ENCODE measurements at regions of chr11 and their contacts with region 1.

Region 1: DNA sequence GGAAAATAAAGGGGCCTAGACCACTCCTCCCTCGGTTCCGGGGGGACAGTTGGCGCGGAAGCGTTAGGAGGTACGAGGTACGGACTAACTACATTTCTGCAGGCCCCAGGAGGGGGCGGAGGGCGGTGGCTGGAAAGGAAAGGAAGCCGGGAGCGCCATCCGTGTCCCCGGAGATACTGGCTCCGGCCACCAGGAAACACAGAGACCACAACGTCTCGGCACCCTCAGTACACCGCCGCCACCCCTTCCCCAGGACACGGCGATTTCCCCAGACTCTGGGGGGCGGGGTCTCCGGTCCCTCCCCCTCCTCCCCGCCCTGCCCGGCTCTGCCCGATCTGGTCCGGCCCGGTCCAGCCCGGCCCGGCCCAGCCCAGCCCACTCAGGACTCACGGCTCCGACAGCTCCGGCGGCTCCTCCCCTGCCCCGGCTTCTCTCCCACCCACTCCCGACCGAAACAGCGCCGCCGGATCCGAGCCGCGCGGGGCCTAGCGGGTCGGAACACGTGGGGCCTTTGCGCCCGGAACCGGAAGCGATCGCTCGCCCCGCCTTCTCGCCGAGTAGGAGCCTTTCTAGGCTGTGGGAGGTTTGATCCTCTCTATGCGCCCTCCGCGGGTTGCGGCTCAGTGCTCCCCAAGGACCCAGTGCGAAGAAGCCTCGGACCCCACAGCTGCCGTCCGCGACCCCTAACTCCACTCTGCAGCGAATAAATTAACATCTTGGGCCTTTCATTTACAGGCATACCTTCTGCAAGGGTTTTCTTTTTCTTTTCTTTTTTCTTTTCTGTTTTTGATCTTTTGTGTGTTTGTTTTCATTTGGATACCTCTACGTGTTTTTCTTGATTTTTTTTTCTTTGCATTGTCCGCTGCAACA is at the start of gene ZNF202:
- DNase-seq: peak; percentile 49 to 90
- H3K4me3 ChIP-seq: peak within 1 kb of the TSS; percentile 82 to 95 (median 89)
- H3K27ac ChIP-seq: peak within 1 kb of the TSS; percentile 56
- H3K4me1 ChIP-seq: peaks cover 2 to 28% (median 14%) of the 10 kb centered on the region in 4 experiments; a peak in 6 of 7 replicates
- H3K27me3 ChIP-seq: no peaks in the 10 kb centered on the region
- CTCF ChIP-seq: peak; percentile 14 to 36 (median 31); a peak in 2 of 4 replicates
- EP300 ChIP-seq: no peak
- POLR2A ChIP-seq: peak; percentile 82 to 85
- RAD21 ChIP-seq: peak; percentile 9 to 21; a peak in 2 of 4 replicates
- total RNA-seq, gene ZNF202: 33.0 and 33.9 TPM in 2 replicates

Region 2: DNA sequence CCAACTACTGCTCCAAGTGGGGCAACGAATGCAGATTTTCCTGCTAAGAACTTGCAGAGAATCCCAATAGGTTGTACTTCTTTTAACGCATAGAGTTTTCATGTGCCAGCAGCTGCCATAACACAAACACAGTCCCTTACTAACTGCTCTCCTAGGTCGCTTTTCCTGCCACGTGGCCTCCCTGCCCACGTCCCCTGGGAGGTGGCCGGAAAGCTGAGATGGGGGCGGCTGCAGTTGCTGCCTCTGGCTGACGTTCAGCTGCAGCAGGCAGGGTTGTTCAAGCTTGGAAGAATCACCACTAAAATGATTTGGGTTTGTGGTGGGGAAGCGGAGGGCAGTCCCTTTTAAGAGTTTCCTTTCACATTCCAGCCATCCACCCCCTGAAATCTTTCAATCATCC is 39.3 kb before region 1 on chr11:
- CTCF ChIA-PET with region 1: no interaction called
- POLR2A ChIA-PET with region 1: no interaction called
- DNase-seq: no peak
- H3K4me3 ChIP-seq: no peak overlapping the region
- H3K27ac ChIP-seq: no peak overlapping the region
- H3K4me1 ChIP-seq: no peaks in the 10 kb centered on the region
- H3K27me3 ChIP-seq: no peaks in the 10 kb centered on the region; a peak in 1 of 7 replicates
- CTCF ChIP-seq: no peak
- EP300 ChIP-seq: no peak
- POLR2A ChIP-seq: no peak
- RAD21 ChIP-seq: no peak

Region 3: GRCh38 chr11:123729602-123730001 is 11.8 kb before region 1 on chr11:
- CTCF ChIA-PET with region 1: interaction called, 5 read pairs
- POLR2A ChIA-PET with region 1: interaction called, 12 read pairs
- DNase-seq: no peak
- H3K4me3 ChIP-seq: no peak overlapping the region
- H3K27ac ChIP-seq: no peak overlapping the region
- H3K4me1 ChIP-seq: no peaks in the 10 kb centered on the region
- H3K27me3 ChIP-seq: no peaks in the 10 kb centered on the region
- CTCF ChIP-seq: no peak
- EP300 ChIP-seq: no peak
- POLR2A ChIP-seq: no peak
- RAD21 ChIP-seq: no peak

Region 4: GRCh38 chr11:123775289-123775688 is 33.9 kb after region 1 on chr11:
- CTCF ChIA-PET with region 1: interaction called, 9 read pairs
- POLR2A ChIA-PET with region 1: interaction called, 11 read pairs
- DNase-seq: peak in 1 of 2 experiments; percentile 53
- H3K4me3 ChIP-seq: peak overlapping the region in 1 of 4 experiments; percentile 27; a peak in 1 of 8 replicates
- H3K27ac ChIP-seq: no peak overlapping the region
- H3K4me1 ChIP-seq: peaks cover 0 to 30% (median 13%) of the 10 kb centered on the region in 4 experiments
- H3K27me3 ChIP-seq: no peaks in the 10 kb centered on the region
- CTCF ChIP-seq: no peak
- EP300 ChIP-seq: peak in 1 of 2 experiments; percentile 71; a peak in 1 of 3 replicates
- POLR2A ChIP-seq: no peak
- RAD21 ChIP-seq: no peak

Measured in H1 (cell line).